ENCODE measurements at regions of chr12 and their contacts with region 1.

Region 1: DNA sequence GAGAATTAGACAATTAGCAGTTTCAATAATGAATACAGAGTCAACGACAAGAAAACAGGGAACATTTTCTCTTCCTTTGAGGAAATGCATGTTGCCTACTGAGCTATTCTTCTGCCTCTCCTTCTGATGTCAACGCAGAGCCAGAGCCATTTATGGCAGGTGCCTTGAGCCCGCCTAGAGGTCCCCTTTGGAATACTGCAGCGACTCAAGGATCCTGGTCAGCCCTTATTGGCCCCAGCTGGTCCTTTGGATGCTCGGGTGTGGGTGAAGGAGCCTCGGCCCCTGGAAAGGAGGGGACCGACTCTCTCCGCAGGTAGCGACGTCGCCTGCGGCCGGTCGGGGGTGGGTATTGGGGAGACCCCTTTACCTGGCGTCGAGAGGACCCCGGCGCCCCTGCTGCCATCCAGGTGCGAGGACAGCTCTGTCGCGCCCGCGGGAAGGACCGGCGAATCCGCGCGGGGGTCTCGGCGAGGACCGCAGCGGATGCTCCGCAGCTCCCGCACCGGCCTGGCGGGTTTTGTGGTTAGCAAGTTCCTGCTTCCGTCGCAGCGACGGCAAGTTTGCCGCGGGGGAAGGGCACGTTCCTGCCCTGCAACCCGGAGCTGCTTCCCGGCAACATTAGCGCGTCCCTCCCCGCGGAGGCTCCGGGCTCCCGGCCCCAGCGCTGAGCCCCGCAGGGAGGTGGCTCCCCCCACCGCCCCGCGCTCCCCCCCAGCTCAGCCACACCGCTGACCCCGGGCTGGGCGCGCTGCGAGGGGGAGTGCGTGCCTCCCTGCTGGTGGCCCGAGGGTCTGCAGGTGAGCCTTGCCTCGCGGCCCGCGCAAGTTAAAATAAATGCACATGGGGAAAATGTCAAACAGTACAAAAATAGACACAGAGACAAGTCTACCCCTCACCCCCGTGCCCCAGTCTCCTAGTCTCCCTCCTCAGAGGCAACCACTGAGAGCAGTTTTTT is at the start of gene MANSC1:
- DNase-seq: peak; percentile 68
- ATAC-seq: peak; percentile 85
- H3K4me3 ChIP-seq: peak within 1 kb of the TSS; percentile 54 to 67 (median 66)
- H3K4me3 Mint-ChIP-seq: peak within 1 kb of the TSS; percentile 83
- H3K27ac ChIP-seq: no peak within 1 kb of the TSS
- H3K27ac Mint-ChIP-seq: peak within 1 kb of the TSS; percentile 27
- H3K4me1 ChIP-seq: peaks cover 11 to 16% of the 10 kb centered on the region in 2 donors
- H3K4me1 Mint-ChIP-seq: peaks cover 16% of the 10 kb centered on the region
- H3K27me3 ChIP-seq: no peaks in the 10 kb centered on the region
- H3K27me3 Mint-ChIP-seq: peaks cover 5% of the 10 kb centered on the region
- CTCF ChIP-seq: peak; percentile 70
- total RNA-seq, gene MANSC1: 0.32 and 0.73 TPM in 2 replicates

Region 2: GRCh38 chr12:12334367-12335040 is 15.5 kb before region 1 on chr12:
- CTCF ChIA-PET with region 1: interaction called, 17 read pairs
- POLR2A ChIA-PET with region 1: no interaction called
- intact Hi-C with region 1: no loop called
- DNase-seq: peak; percentile 70
- ATAC-seq: peak; percentile 68
- H3K4me3 ChIP-seq: no peak overlapping the region
- H3K4me3 Mint-ChIP-seq: no peak overlapping the region
- H3K27ac ChIP-seq: no peak overlapping the region
- H3K27ac Mint-ChIP-seq: no peak overlapping the region
- H3K4me1 ChIP-seq: peaks cover 4 to 10% of the 10 kb centered on the region in 2 donors
- H3K4me1 Mint-ChIP-seq: peaks cover 7% of the 10 kb centered on the region
- H3K27me3 ChIP-seq: no peaks in the 10 kb centered on the region
- H3K27me3 Mint-ChIP-seq: peaks cover 16% of the 10 kb centered on the region
- CTCF ChIP-seq: peak; percentile 89